HEK293 (cell line): ENCODE measurements at regions of chr7 and their contacts with region 1.

Region 1: GRCh38 chr7:131654668-131655326 is 98.4 kb upstream of the PODXL start:
- H3K4me3 ChIP-seq: no peak overlapping the region
- H3K27ac ChIP-seq: no peak overlapping the region
- H3K4me1 ChIP-seq: no peaks in the 10 kb centered on the region
- CTCF ChIP-seq: peak; percentile 91

Region 2: GRCh38 chr7:131507592-131508331 is 147.0 kb before region 1 on chr7:
- CTCF ChIA-PET with region 1: interaction called, 45 read pairs
- POLR2A ChIA-PET with region 1: no interaction called
- H3K4me3 ChIP-seq: no peak overlapping the region
- H3K27ac ChIP-seq: no peak overlapping the region
- H3K4me1 ChIP-seq: no peaks in the 10 kb centered on the region
- CTCF ChIP-seq: peak; percentile 81

Region 3: GRCh38 chr7:131513245-131514061 is 141.3 kb before region 1 on chr7:
- CTCF ChIA-PET with region 1: interaction called, 45 read pairs
- POLR2A ChIA-PET with region 1: no interaction called
- H3K4me3 ChIP-seq: no peak overlapping the region
- H3K27ac ChIP-seq: no peak overlapping the region
- H3K4me1 ChIP-seq: no peaks in the 10 kb centered on the region
- CTCF ChIP-seq: peak; percentile 89

Region 4: GRCh38 chr7:131546583-131547111 is 108.2 kb before region 1 on chr7:
- CTCF ChIA-PET with region 1: interaction called, 34 read pairs
- POLR2A ChIA-PET with region 1: no interaction called
- H3K4me3 ChIP-seq: no peak overlapping the region
- H3K27ac ChIP-seq: no peak overlapping the region
- H3K4me1 ChIP-seq: no peaks in the 10 kb centered on the region
- CTCF ChIP-seq: peak; percentile 68